ENCODE measurements at regions of chr15 and their contacts with region 1.

Region 1: DNA sequence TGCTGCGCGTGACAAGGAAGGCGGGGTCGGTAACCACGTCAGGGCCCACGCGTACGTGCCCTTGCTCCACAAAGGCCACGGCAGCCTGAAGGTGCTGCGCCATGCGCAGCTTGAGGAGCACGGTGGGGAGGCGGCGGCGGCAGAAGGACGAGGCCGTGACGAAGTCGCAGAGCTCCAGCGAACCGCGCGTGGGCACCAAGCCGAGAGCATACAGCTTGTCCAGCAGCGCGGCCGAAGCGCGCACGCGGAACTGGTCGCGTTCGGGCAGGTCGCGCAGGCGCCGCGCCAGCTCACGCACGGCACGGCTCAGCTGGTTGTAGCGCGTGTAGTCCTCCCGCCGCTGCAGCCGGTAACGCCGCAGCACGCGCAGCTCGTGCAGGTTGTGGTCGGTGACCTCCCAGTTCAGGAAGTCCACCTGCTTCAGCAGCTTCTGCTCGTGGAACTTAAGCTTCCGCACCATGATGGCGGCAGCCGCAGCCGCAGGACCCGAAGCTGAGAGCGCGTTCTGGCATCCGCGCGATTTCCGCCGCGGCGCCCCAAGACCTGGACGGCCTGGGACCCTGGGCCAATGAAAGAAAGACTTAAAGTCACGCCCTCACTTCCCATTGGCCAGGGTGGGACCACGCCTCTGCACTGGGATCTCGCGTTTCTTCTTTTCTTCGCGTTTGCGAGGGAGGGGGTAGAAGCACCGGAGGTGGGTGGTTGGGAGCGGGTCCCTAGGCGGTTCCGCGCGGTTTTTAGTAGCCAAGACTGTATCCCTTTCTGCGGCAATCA is at the start of gene IMP3:
- DNase-seq: peak; percentile 97 to 99 (median 99)
- H3K4me3 ChIP-seq: peak within 1 kb of the TSS; percentile 77 to 99 (median 84)
- H3K27ac ChIP-seq: peak within 1 kb of the TSS; percentile 54 to 86
- H3K4me1 ChIP-seq: peaks cover 10 to 37% (median 27%) of the 10 kb centered on the region in 4 experiments
- H3K27me3 ChIP-seq: no peaks in the 10 kb centered on the region

Region 2: DNA sequence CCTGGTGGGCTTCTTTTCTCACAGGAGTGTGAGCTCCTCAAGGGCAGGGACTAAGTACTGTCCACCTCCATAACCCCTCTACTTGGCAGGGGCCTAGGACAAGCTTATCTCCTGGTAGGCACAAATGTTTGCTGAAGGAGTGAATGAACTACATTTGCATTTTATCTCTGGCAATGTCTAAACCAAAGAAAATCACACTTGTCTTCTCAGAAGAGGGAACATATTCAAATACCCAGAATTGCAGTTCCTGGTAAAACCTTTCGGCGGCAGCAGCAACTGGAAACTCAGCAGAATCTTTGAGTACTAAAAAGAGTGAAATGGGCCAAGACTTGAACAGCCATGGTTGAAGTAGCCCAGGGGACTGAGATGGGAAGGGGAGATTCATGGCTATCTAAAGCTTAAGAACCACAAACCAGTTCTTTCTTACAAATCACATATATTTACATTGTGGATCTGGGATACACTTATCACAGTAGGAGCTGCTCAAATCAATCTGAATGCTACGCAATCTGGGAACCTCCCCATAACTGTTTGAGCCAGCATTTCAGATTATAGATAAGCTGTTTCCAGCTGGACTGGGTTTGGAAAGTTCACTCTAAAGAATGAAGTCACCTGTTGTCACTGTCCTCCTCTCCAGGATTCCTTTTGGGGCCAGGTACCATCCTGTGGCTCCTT is 42.1 kb before region 1 on chr15:
- CTCF ChIA-PET with region 1: interaction called, 21 read pairs
- POLR2A ChIA-PET with region 1: no interaction called
- DNase-seq: peak; percentile 17 to 57 (median 47)
- H3K4me3 ChIP-seq: no peak overlapping the region
- H3K27ac ChIP-seq: no peak overlapping the region
- H3K4me1 ChIP-seq: peaks cover 0 to 15% (median 0%) of the 10 kb centered on the region in 4 experiments
- H3K27me3 ChIP-seq: no peaks in the 10 kb centered on the region

Region 3: DNA sequence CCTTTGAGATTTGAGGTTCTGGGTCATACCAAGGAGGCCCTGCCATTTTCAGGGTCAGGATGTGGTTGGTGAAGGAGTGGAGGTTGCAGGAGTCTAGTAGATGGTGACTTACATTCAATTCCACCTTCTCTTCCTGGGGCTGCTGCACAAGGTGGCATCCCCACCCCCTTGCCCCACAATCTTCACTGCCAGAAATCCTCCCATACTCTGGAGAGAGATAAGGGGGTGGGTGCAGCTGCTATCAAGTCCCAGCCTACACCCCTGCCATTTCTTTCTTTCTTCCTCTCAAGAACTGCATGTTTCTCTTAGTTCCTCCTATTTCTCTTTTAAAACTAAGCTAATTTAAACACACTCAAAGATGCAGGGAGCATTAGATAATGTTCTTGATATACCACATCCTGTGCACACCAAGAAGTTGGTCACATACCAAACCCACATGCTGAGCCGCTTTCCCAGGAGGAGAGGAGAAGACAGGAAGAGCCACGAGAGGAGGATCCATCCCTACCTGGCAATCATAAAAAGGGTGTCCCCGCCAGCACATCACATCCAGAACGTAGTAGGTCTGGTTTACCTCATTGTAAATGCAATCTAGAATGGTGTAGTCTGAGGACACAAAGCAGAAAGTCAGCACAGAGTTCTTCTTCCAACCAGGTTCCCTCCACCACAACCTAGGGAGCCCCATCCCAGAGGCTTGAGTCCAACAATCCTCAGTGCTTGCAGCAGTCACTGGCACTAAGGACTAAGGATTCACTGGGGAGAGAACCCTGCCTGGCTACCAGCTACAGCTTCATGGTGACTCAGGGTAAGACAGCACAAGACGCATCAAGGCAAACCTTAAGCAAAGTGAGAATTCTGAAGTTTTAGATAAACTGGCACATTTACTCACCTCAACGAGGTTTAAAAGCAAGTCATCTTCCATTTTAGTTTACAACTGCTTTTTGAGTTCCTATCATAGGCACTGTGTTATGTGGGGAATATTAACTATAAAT is 32.9 kb before region 1 on chr15:
- CTCF ChIA-PET with region 1: interaction called, 11 read pairs
- POLR2A ChIA-PET with region 1: interaction called, 4 read pairs
- DNase-seq: peak; percentile 52 to 87 (median 78)
- H3K4me3 ChIP-seq: peak overlapping the region in 3 of 7 experiments; percentile 6 to 42 (median 35)
- H3K27ac ChIP-seq: peak overlapping the region in 1 of 2 experiments; percentile 43
- H3K4me1 ChIP-seq: peaks cover 15 to 33% (median 28%) of the 10 kb centered on the region in 4 experiments
- H3K27me3 ChIP-seq: no peaks in the 10 kb centered on the region

Region 4: DNA sequence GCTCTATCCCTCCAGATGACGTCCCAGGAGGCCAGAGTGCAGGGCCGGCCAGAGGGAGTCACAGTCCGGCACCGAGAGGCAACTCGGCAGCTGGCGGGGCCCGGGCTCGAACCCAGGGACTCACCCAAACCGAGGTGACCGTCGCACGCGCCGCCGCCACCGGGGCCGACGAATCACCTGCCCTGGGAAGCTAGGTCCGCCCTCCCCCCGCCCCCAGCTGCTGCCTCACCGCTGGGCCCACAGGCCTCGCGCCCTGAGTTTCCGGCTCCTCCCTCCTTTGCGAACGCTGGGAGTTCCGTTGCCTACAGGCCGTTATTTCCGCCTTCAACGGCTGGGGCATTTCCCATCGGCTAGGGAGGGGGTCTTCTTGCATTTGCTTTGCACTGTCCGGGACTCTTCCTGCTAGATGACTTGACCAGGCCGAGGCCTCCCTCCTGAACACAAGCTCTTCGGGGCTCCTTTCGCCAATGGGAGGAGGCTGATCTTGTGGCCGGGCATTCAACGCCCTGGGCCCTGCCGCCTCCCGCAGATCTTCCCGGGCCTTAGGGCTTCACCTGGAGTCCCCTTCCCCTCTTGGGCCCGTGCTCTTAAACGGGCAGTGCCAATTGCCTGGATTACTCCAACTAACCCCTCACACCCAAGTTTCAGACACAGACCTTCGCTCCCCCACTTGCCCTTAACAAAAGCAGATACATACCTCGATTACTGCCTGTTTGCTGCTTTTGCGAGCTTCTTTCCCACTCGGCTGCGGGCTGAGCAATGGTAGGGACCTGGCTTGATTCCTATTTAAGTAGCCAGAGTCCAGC is 14.2 kb before region 1 on chr15 and contains the start of gene SNUPN:
- CTCF ChIA-PET with region 1: interaction called, 31 read pairs
- POLR2A ChIA-PET with region 1: interaction called, 17 read pairs
- DNase-seq: peak; percentile 94 to 99 (median 97)
- H3K4me3 ChIP-seq: peak within 1 kb of the TSS; percentile 63 to 98 (median 93)
- H3K27ac ChIP-seq: peak within 1 kb of the TSS; percentile 92 to 96
- H3K4me1 ChIP-seq: peaks cover 7 to 37% (median 20%) of the 10 kb centered on the region in 4 experiments
- H3K27me3 ChIP-seq: no peaks in the 10 kb centered on the region